ENCODE measurements at regions of chr2 and their contacts with region 1.

Region 1: DNA sequence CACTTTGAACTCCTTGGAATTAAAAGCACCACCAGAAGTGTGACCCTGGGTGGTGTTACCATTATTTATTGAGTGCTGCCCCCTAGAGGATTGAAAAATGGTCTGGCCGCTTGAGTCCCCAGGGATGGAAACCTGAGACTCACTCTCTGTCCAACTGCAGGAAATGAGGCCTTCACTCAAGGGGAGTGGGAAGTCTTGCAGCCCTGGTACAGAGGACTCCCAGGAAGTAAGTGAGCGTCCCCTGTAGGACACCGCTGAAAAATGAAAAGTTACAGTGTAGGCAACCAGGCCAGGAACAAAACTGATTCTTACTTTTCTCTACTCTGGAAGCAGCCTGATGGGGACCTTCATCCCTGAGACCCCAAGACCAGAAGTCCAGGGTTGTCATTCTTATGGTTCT is 2.2 kb upstream of the NRP2 start:
- ATAC-seq: peak; percentile 16 to 60 (median 26)
- H3K4me3 ChIP-seq: no peak overlapping the region
- H3K27ac ChIP-seq: no peak overlapping the region
- H3K4me1 ChIP-seq: peaks cover 3 to 9% of the 10 kb centered on the region in 2 donors

Region 2: DNA sequence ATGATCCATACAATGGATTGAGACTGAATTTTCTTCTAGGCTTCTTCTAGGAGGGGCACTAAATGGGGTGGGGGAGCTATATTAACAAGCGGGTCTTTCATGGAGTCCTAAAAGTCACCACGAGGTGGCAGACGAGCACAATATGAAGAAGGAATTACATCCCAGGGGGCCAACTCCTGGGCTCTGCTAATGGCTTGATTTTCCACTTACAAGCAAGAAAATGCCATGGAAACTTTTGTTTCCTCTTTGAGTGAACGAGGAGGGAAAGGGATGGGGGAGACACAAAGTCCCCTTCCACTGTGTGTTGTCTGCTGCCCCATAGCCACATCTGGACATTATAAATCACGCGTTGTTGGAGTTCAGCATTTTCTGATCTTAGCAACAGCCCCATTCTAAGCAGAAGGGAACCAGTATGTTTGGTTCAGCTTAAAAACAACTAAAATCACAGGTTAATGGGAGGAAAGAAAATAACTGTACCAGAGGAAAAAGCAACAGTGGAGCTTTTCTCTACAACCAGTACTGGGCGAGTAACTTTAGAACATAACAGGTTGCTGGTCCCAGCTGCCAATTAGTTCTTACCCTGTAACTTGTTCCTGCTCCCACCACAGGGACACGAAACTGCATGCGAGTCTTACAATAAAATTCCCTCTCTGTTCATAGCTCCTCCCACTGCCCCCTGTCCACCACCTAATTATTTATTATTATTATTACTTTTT is 1419.7 kb before region 1 on chr2:
- in situ Hi-C with region 1: loop called in 1 of 9 experiments (anchors 25 kb)
- ATAC-seq: peak; percentile 64 to 96 (median 78)
- H3K4me3 ChIP-seq: no peak overlapping the region
- H3K27ac ChIP-seq: peak overlapping the region in 1 of 2 donors; percentile 2
- H3K4me1 ChIP-seq: peaks cover 62 to 69% of the 10 kb centered on the region in 2 donors

Region 3: GRCh38 chr2:204325468-204325867 is 1354.6 kb before region 1 on chr2:
- in situ Hi-C with region 1: loop called in 3 of 9 experiments (anchors 25 kb)
- ATAC-seq: peak; percentile 85 to 100 (median 98)
- H3K4me3 ChIP-seq: no peak overlapping the region
- H3K27ac ChIP-seq: no peak overlapping the region
- H3K4me1 ChIP-seq: peaks cover 0 to 23% of the 10 kb centered on the region in 2 donors

Region 4: DNA sequence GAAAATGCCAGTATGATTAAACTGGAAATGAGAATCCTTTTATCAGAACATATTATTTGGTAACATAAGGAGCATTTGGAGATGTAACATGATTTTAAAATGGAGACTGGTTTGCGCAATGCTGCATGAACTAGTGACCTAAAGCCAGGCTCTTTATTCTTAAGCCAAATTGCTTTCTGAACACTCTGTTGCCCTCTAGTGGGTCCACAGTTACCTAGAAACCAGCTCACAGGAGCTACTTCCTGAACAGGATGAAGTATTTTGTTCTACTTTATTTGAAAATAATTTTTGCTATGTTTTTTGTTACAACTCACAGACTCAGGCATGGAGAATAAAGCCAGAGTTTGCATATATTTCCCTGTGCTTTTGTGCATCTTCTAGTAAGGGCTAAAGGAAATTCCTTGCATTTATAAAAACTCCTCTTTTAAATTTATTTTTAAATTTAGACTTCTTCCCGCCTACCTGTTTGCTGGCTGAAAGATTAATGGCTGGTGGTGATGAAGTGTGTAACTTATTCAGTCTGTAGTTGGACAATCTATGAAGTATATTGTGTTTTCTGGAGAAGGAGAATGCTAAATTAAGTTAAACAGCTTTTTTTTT is 988.1 kb before region 1 on chr2:
- in situ Hi-C with region 1: loop called in 1 of 9 experiments (anchors 25 kb)
- ATAC-seq: peak; percentile 67 to 96 (median 81)
- H3K4me3 ChIP-seq: no peak overlapping the region
- H3K27ac ChIP-seq: no peak overlapping the region
- H3K4me1 ChIP-seq: peaks cover 0 to 2% of the 10 kb centered on the region in 2 donors

Region 5: DNA sequence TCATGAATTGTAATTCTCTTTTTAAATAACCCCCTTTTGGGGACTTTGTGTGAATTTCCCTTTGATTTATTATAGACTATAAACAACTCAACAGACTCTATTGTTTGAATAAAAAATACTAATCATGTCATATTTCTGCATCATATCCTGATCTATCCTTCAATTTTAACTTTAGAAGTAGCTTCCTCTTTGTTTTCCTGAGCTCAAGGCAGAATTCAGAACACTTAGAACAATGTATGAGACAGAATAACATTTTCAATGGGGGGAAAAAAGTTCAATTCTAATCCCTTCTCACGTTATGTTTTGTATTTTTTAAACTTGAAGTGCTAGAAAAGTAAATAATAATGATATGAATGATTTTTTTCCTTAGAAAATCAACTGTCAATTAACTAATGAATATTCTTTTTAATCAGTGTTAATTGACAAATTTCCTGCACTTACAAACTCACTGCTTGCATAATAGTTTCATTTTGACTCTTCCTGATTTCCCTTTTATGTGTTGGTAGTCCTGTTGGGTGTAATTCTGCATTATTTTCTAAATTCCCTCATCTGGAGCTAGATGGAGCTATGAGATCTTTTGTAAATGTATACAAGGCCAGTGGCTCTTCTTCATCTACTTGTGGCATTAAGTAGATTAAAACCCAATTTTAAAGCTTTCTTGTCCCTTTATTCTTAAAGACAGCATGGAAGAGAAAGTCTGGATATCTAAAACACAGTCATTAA is 808.7 kb before region 1 on chr2:
- in situ Hi-C with region 1: loop called in 1 of 9 experiments (anchors 25 kb)
- ATAC-seq: peak in 4 of 8 experiments; percentile 50 to 66 (median 60)
- H3K4me3 ChIP-seq: no peak overlapping the region
- H3K27ac ChIP-seq: no peak overlapping the region
- H3K4me1 ChIP-seq: no peaks in the 10 kb centered on the region

Region 6: DNA sequence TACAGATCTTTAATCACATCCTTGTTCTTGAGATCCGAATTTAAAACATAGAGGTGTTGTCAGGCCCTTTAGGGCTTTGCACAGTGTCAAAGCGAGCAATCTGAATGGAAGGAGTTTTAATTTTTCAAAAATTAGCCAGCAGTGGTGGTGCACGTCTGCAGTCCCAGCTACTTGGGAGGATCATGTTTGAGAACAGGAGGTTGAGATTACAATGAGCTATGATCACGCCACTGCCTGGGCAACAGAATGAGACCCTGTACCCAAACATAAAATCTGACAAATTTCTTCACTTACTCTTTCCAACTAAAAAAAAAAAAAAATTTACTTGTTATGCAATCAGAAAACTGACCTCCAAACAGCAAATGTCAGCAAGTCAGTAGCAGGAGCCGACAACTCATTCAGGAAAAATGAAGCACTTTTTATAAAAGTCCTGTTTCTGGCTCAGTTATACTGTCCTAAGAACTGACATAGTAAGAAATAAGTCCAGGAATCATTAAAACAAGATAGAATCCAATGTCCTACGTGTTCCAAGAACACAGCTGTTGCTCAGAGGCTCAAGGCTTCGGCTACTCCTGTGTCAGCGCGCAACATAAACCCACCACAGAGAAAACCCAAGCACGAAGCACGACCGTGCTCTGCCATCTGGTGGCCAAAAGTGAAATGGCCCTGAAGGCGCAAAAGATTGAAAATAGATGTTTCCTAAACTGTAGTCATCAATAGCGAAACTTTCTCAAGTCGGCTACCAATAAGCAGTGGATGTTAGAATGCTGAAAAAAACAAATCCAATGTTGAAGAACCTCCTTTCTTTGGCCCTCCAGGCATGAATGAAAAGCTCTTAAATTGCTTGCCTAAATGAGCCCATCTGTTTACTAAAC is 267.8 kb after region 1 on chr2:
- in situ Hi-C with region 1: loop called in 2 of 9 experiments (anchors 25 kb)
- ATAC-seq: peak; percentile 65 to 88 (median 82)
- H3K4me3 ChIP-seq: no peak overlapping the region
- H3K27ac ChIP-seq: no peak overlapping the region
- H3K4me1 ChIP-seq: peaks cover 7 to 10% of the 10 kb centered on the region in 2 donors

Region 7: DNA sequence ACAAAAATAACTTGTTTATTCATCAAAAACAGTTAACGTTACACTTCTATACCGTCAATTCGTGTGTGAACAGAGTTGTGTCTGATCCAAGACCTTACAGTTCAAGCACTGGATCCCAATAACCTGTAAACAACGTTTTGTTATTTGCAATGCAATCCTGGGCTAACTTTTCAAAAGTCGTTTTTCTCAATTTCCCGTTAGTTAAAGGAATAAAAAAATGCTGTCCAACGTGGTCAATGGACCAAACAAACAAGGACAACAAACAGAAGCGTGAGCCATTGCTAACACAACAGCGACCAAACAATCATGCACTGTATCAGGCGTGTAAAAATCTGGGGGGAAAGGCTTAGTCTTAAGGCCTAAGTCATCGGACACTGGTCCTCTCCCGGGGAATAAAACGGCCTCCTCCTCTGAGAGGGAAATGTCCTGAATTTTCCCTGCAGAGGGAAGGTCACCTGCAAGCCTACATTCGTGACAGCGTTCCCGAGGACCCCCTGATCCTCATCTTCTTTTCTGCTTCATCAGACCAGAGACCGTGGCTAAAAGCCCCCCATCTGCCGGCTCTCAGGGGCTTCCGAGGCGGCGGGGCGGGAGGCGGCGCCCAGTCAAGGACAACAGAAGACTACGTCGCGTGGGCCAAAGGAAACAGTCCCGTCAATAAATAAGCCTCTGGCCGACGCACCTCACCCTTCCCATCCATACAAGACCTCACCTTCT is 478.7 kb after region 1 on chr2:
- in situ Hi-C with region 1: no loop called
- ATAC-seq: peak; percentile 0 to 30 (median 2)
- H3K4me3 ChIP-seq: peak overlapping the region; percentile 47 to 93 (median 65)
- H3K27ac ChIP-seq: peak overlapping the region; percentile 92 to 95
- H3K4me1 ChIP-seq: peaks cover 3 to 11% of the 10 kb centered on the region in 2 donors